ENCODE measurements at regions of chr2 and their contacts with region 1.

Region 1: GRCh38 chr2:211085056-211085680 is 528.8 kb downstream of the CPS1 start:
- H3K4me3 ChIP-seq: no peak overlapping the region
- H3K27ac ChIP-seq: no peak overlapping the region
- H3K4me1 ChIP-seq: no peaks in the 10 kb centered on the region
- CTCF ChIP-seq: no peak

Region 2: GRCh38 chr2:210584834-210585233 is 500.3 kb before region 1 on chr2:
- CTCF ChIA-PET with region 1: interaction called, 11 read pairs
- POLR2A ChIA-PET with region 1: no interaction called
- H3K4me3 ChIP-seq: no peak overlapping the region
- H3K27ac ChIP-seq: no peak overlapping the region
- H3K4me1 ChIP-seq: no peaks in the 10 kb centered on the region
- CTCF ChIP-seq: no peak